ENCODE measurements at regions of chr18 and their contacts with region 1.

Region 1: GRCh38 chr18:67463829-67464228 is 52.7 kb downstream of the DSEL start:
- DNase-seq: no peak
- ATAC-seq: no peak
- H3K4me3 ChIP-seq: no peak overlapping the region
- H3K4me3 Mint-ChIP-seq: no peak overlapping the region
- H3K27ac ChIP-seq: no peak overlapping the region
- H3K27ac Mint-ChIP-seq: no peak overlapping the region
- H3K4me1 ChIP-seq: peaks cover 12 to 17% of the 10 kb centered on the region in 2 donors
- H3K4me1 Mint-ChIP-seq: peaks cover 16% of the 10 kb centered on the region
- H3K27me3 ChIP-seq: no peaks in the 10 kb centered on the region
- H3K27me3 Mint-ChIP-seq: peaks cover 3% of the 10 kb centered on the region
- CTCF ChIP-seq: no peak

Region 2: GRCh38 chr18:66990909-66991308 is 472.9 kb before region 1 on chr18:
- CTCF ChIA-PET with region 1: no interaction called
- POLR2A ChIA-PET with region 1: no interaction called
- intact Hi-C with region 1: no loop called
- DNase-seq: no peak
- ATAC-seq: no peak
- H3K4me3 ChIP-seq: no peak overlapping the region
- H3K4me3 Mint-ChIP-seq: no peak overlapping the region
- H3K27ac ChIP-seq: no peak overlapping the region
- H3K27ac Mint-ChIP-seq: no peak overlapping the region
- H3K4me1 ChIP-seq: no peaks in the 10 kb centered on the region
- H3K4me1 Mint-ChIP-seq: no peaks in the 10 kb centered on the region
- H3K27me3 ChIP-seq: no peaks in the 10 kb centered on the region
- H3K27me3 Mint-ChIP-seq: no peaks in the 10 kb centered on the region
- CTCF ChIP-seq: no peak

Region 3: GRCh38 chr18:67451960-67452359 is 11.9 kb before region 1 on chr18:
- CTCF ChIA-PET with region 1: no interaction called
- POLR2A ChIA-PET with region 1: no interaction called
- intact Hi-C with region 1: no loop called
- DNase-seq: no peak
- ATAC-seq: no peak
- H3K4me3 ChIP-seq: no peak overlapping the region
- H3K4me3 Mint-ChIP-seq: no peak overlapping the region
- H3K27ac ChIP-seq: no peak overlapping the region
- H3K27ac Mint-ChIP-seq: no peak overlapping the region
- H3K4me1 ChIP-seq: no peaks in the 10 kb centered on the region
- H3K4me1 Mint-ChIP-seq: no peaks in the 10 kb centered on the region
- H3K27me3 ChIP-seq: no peaks in the 10 kb centered on the region
- H3K27me3 Mint-ChIP-seq: no peaks in the 10 kb centered on the region
- CTCF ChIP-seq: no peak

Region 4: GRCh38 chr18:67478249-67478648 is 14.4 kb after region 1 on chr18:
- CTCF ChIA-PET with region 1: no interaction called
- POLR2A ChIA-PET with region 1: no interaction called
- intact Hi-C with region 1: loop called (anchors 2 kb)
- DNase-seq: no peak
- ATAC-seq: no peak
- H3K4me3 ChIP-seq: no peak overlapping the region
- H3K4me3 Mint-ChIP-seq: no peak overlapping the region
- H3K27ac ChIP-seq: no peak overlapping the region
- H3K27ac Mint-ChIP-seq: no peak overlapping the region
- H3K4me1 ChIP-seq: no peaks in the 10 kb centered on the region
- H3K4me1 Mint-ChIP-seq: no peaks in the 10 kb centered on the region
- H3K27me3 ChIP-seq: no peaks in the 10 kb centered on the region
- H3K27me3 Mint-ChIP-seq: no peaks in the 10 kb centered on the region
- CTCF ChIP-seq: no peak

Region 5: GRCh38 chr18:67515945-67516538 is 52.2 kb after region 1 on chr18:
- CTCF ChIA-PET with region 1: interaction called, 7 read pairs
- POLR2A ChIA-PET with region 1: interaction called, 7 read pairs
- intact Hi-C with region 1: loop called (anchors 1 kb)
- DNase-seq: peak; percentile 74
- ATAC-seq: no peak
- H3K4me3 ChIP-seq: peak overlapping the region; percentile 42 to 76 (median 71)
- H3K4me3 Mint-ChIP-seq: peak overlapping the region; percentile 93
- H3K27ac ChIP-seq: no peak overlapping the region
- H3K27ac Mint-ChIP-seq: peak overlapping the region; percentile 34
- H3K4me1 ChIP-seq: peaks cover 6 to 17% of the 10 kb centered on the region in 2 donors
- H3K4me1 Mint-ChIP-seq: peaks cover 20% of the 10 kb centered on the region
- H3K27me3 ChIP-seq: peaks cover 0 to 19% (median 15%) of the 10 kb centered on the region in 4 experiments
- H3K27me3 Mint-ChIP-seq: peaks cover 11% of the 10 kb centered on the region
- CTCF ChIP-seq: peak; percentile 29